IMR-90 (cell line): ENCODE measurements at regions of chr6 and their contacts with region 1.

Region 1: DNA sequence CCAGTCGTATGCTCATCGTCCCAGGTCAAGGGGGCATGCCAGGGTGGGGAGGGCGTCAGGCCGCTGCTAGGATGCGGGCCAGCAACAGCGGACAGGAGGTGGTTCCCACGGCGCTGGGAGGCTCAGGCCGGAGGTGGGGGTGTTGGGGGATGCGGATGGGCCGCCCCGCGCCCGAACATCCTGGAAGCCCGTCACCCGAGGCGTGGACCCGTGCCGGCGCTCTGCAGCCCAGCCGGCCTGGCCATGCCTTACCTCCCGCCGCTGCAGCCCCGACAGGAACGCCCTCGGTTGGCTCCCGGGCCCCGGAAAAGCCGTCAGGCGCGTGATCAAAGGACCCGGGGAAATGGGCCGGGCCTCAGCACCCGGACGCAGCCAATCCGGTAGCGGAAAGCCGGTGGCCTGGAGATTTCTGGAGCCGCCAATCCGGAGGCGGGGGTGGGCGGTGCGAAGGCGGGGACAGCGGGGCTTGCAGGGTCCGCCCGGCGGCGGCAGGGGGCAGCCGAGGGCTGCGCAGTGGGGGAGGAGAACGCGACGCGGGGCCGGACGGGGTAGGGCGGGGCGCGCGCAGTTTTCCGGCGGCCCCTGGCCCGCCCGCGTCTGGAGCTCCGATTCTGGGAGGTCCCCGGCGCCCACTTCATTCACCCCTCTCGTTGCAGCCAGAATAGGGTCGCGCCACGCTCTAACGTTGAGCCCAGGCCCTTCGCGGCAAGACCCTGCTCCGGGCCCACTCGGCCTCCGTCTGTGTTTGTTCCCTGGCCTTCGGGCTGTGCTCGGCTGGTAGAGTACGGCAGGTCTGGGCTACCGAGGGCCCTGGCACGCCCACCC is at the start of gene SMIM29:
- DNase-seq: peak; percentile 91
- ATAC-seq: peak; percentile 85
- H3K4me3 ChIP-seq: peak within 1 kb of the TSS; percentile 65
- H3K27ac ChIP-seq: peak within 1 kb of the TSS; percentile 87
- H3K4me1 ChIP-seq: peaks cover 9% of the 10 kb centered on the region
- H3K27me3 ChIP-seq: no peaks in the 10 kb centered on the region
- CTCF ChIP-seq: peak; percentile 96
- POLR2A ChIP-seq: peak; percentile 74
- RAD21 ChIP-seq: peak; percentile 82
- total RNA-seq, gene SMIM29: 8.1 and 8.4 TPM in 2 replicates

Region 2: GRCh38 chr6:32614366-32615081 is 1634.4 kb before region 1 on chr6:
- CTCF ChIA-PET with region 1: no interaction called
- POLR2A ChIA-PET with region 1: no interaction called
- dilution Hi-C with region 1: no loop called
- in situ Hi-C with region 1: no loop called
- intact Hi-C with region 1: no loop called
- DNase-seq: no peak
- ATAC-seq: no peak
- H3K4me3 ChIP-seq: no peak overlapping the region
- H3K27ac ChIP-seq: no peak overlapping the region
- H3K4me1 ChIP-seq: no peaks in the 10 kb centered on the region
- H3K27me3 ChIP-seq: no peaks in the 10 kb centered on the region
- CTCF ChIP-seq: no peak
- POLR2A ChIP-seq: no peak
- RAD21 ChIP-seq: no peak

Region 3: DNA sequence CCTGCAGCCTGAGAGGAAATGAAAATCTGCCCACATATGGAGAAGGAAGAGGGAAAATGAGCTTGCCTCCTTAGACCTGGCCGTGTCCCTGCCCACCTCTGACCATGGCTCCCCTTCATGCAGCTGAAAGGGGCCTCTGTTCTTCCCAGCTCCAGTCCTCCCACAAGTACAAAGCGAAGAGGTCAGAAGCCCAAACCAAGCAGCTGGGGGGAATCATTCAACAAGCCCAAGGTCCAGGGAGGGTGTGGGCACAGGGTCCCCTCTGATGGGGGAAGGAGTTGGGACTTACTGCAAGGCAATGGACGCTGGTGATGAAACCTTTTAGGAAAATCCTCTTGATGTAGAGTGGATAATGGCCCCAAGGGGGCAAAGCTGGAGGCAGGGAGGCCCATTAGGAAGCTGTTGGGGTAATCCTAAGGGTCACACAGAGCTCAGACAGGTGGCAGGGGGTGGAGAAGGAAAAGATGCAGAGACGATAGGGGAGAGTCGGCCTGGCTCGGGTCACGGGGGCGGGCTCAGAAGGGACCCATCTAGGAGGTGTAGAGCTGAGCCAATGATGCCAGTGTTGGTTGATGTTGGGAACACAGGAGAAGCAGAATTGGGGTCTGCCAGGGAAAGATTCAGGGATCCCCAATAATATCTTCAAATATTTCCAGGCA is 87.0 kb before region 1 on chr6:
- CTCF ChIA-PET with region 1: interaction called, 8 read pairs
- POLR2A ChIA-PET with region 1: no interaction called
- dilution Hi-C with region 1: no loop called
- in situ Hi-C with region 1: no loop called
- intact Hi-C with region 1: loop called (anchors 2 kb)
- DNase-seq: no peak
- ATAC-seq: no peak
- H3K4me3 ChIP-seq: no peak overlapping the region
- H3K27ac ChIP-seq: no peak overlapping the region
- H3K4me1 ChIP-seq: no peaks in the 10 kb centered on the region
- H3K27me3 ChIP-seq: peaks cover 7% of the 10 kb centered on the region
- CTCF ChIP-seq: no peak
- POLR2A ChIP-seq: no peak
- RAD21 ChIP-seq: no peak

Region 4: DNA sequence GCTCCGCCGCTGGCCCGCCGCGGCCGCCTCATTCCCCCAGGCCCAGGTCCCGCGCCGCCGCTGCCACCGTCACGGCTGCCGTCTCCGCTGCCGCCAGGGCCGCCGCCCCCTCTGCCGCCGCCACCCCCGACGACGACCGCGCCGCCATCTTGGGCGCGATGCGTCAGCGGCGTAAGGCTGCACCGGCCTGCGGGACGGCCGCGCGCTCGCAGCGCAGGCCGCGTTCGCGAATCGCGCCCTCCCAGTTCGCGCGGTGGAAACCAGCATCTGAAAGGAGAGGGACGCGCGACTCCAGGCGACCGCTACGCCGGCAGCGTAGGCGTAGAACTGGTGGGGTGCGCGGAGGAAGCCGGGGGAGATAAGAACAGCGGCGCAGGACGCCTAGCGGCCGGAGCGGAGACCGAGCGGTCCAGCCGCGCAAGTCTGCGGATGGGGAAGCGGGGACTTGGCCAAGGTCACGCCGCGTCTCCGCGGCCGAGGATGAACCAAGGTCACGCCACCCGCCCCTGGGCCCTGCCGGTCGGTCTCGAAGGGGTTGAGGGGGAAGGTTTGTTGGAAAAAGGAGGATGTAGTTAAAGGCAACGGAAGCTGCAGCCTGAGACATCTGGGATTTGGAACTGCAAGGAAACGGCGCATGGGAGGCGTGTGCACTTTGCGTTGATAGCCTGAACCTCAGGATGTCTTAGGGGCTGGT is 143.7 kb after region 1 on chr6 and contains the start of gene NUDT3:
- CTCF ChIA-PET with region 1: interaction called, 4 read pairs
- POLR2A ChIA-PET with region 1: no interaction called
- dilution Hi-C with region 1: no loop called
- in situ Hi-C with region 1: no loop called
- intact Hi-C with region 1: loop called (anchors 1 kb)
- DNase-seq: peak; percentile 93
- ATAC-seq: peak; percentile 92
- H3K4me3 ChIP-seq: peak within 1 kb of the TSS; percentile 93
- H3K27ac ChIP-seq: peak within 1 kb of the TSS; percentile 94
- H3K4me1 ChIP-seq: no peaks in the 10 kb centered on the region
- H3K27me3 ChIP-seq: no peaks in the 10 kb centered on the region
- CTCF ChIP-seq: peak; percentile 86
- POLR2A ChIP-seq: no peak
- RAD21 ChIP-seq: peak; percentile 80
- total RNA-seq, gene NUDT3: 17.2 and 21.4 TPM in 2 replicates

Region 5: DNA sequence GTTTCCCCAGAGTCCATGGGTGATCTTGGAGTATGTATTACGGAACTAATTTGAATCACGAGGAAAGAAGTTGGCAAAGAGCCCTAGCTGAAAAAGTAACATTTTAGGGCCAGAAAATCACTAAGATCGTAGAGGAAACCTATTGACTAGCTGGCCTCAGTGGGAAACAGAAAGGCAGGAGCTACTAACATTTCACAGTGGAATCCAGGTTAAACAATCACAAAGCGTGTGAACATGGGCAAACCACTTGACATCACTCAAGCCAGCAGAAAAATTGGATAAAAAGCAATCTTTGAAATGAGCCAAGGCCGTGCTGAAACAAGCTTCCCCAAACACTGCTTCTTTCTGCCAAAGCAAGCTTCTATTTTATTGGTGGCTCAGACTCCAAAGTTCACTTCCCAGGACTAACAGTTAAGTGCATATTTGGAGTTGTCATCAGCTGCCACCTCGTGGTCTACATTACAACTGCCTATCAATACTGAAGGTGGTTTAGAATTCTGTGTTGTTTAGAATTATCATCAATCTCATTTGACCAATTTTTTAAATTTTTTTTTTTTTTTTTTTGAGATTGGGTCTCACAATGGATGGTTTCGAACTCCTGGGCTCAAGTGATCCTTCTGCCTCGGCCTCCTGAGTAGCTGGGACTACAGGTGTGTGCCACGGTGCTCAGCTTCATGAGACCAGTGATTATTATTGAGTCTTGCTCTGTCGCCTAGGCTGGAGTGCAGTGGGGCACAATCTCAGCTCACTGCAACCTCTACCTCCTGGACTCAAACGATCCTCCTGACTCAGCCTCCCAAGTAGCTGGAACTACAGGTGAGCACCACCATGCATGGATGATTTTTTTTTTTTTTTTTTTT is 166.3 kb after region 1 on chr6:
- CTCF ChIA-PET with region 1: interaction called, 12 read pairs
- POLR2A ChIA-PET with region 1: interaction called, 8 read pairs
- dilution Hi-C with region 1: no loop called
- in situ Hi-C with region 1: no loop called
- intact Hi-C with region 1: loop called (anchors 2 kb)
- DNase-seq: peak; percentile 65
- ATAC-seq: peak; percentile 50
- H3K4me3 ChIP-seq: no peak overlapping the region
- H3K27ac ChIP-seq: no peak overlapping the region
- H3K4me1 ChIP-seq: no peaks in the 10 kb centered on the region
- H3K27me3 ChIP-seq: no peaks in the 10 kb centered on the region
- CTCF ChIP-seq: peak; percentile 63
- POLR2A ChIP-seq: 0 out of 2 replicates have a peak, but pooled peaks have one; percentile 17
- RAD21 ChIP-seq: peak; percentile 65

Region 6: GRCh38 chr6:34526992-34527728 is 278.2 kb after region 1 on chr6:
- CTCF ChIA-PET with region 1: no interaction called
- POLR2A ChIA-PET with region 1: no interaction called
- dilution Hi-C with region 1: no loop called
- in situ Hi-C with region 1: no loop called
- intact Hi-C with region 1: loop called (anchors 1 kb)
- DNase-seq: peak; percentile 83
- ATAC-seq: peak; percentile 98
- H3K4me3 ChIP-seq: peak overlapping the region; percentile 48
- H3K27ac ChIP-seq: no peak overlapping the region
- H3K4me1 ChIP-seq: peaks cover 4% of the 10 kb centered on the region
- H3K27me3 ChIP-seq: peaks cover 11% of the 10 kb centered on the region; the same call in 1 of the 2 replicates
- CTCF ChIP-seq: peak; percentile 68
- POLR2A ChIP-seq: no peak
- RAD21 ChIP-seq: peak; percentile 71

Region 7: DNA sequence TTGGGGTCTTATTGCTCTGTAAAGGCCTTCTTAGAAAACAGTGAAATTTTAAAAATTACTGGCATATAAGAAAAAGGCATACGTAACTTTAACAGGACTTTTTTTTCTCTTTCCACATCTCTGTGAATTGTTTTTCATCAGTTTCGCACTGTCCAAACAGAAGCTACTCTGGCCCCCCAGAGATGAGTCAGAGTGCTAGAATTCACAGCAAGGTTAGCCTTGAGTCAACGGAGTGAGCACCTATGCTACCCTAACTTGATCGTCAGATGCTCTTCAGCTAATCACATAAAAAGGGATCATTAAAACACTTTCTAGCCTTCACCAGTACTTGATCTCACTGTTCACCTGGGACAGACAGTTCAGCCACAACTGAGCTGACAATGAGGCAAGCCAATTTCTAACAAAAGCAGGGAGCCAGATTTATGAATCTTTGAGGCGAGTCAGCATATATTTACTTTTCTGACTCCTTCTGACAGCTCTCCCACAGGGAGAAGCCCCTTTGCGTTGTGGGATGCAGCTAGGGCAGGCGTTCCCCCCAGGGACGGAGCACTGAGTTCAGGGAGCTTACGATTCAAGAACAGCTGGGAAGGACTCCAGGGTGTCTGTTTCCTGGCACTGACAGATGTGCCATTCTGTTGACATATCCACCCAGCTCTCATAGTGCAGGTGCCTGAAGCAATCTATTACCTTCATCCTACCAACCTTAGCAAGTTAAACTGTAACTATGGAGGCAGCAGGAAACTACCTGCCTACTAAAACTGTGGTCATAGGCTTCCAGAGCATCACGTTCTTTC is 353.6 kb after region 1 on chr6:
- CTCF ChIA-PET with region 1: no interaction called
- POLR2A ChIA-PET with region 1: no interaction called
- dilution Hi-C with region 1: no loop called
- in situ Hi-C with region 1: loop called (anchors 10 kb)
- intact Hi-C with region 1: no loop called
- DNase-seq: peak; percentile 28
- ATAC-seq: peak; percentile 33; the same call in 1 of the 2 replicates
- H3K4me3 ChIP-seq: no peak overlapping the region
- H3K27ac ChIP-seq: no peak overlapping the region
- H3K4me1 ChIP-seq: peaks cover 10% of the 10 kb centered on the region
- H3K27me3 ChIP-seq: no peaks in the 10 kb centered on the region
- CTCF ChIP-seq: no peak
- POLR2A ChIP-seq: no peak
- RAD21 ChIP-seq: no peak